ENCODE measurements at regions of chr1 and their contacts with region 1.

Region 1: DNA sequence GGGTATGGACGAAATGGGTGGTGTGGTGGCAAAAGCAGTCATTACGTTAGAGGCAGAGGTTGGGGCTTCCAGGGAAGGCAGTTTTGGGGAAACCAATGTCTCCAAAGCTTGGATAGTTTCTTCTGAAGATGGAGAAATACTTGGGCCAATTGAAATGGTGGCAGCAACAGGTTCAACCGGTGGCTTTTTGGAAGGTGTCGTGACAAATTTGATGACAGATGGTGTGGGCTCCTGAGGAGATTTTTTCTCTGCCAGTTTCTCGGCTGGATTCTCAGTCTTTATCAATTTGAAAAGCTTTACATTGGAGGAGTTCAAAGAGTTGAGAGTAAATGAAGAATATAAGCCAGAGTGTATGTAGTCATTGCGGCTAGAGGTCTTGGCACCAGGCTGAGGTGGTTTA is 11.5 kb downstream of the ELK4 start:
- DNase-seq: no peak
- H3K4me3 ChIP-seq: no peak overlapping the region
- H3K27ac ChIP-seq: no peak overlapping the region
- H3K4me1 ChIP-seq: peaks cover 12% of the 10 kb centered on the region
- H3K27me3 ChIP-seq: no peaks in the 10 kb centered on the region
- CTCF ChIP-seq: no peak

Region 2: GRCh38 chr1:205563867-205564441 is 56.3 kb before region 1 on chr1:
- CTCF ChIA-PET with region 1: no interaction called
- dilution Hi-C with region 1: loop called (anchors 5 kb)
- in situ Hi-C with region 1: no loop called
- intact Hi-C with region 1: no loop called
- DNase-seq: no peak
- H3K4me3 ChIP-seq: no peak overlapping the region
- H3K27ac ChIP-seq: no peak overlapping the region
- H3K4me1 ChIP-seq: peaks cover 1% of the 10 kb centered on the region
- H3K27me3 ChIP-seq: peaks cover 8% of the 10 kb centered on the region
- CTCF ChIP-seq: no peak

Measured in mammary epithelial cell (primary cell).